OCI-LY7 (cell line): ENCODE measurements at regions of chr5 and their contacts with region 1.

Region 1: GRCh38 chr5:34915139-34915855 is at the starts of genes BRIX1 and RAD1:
- DNase-seq: peak; percentile 96
- H3K4me3 ChIP-seq: peak within 1 kb of the TSS; percentile 86
- H3K27ac ChIP-seq: peak within 1 kb of the TSS; percentile 79
- H3K4me1 ChIP-seq: peaks cover 27% of the 10 kb centered on the region
- CTCF ChIP-seq: no peak
- total RNA-seq, gene BRIX1: 59.7 and 75.6 TPM in 2 replicates
- total RNA-seq, gene RAD1: 58.4 and 82.1 TPM in 2 replicates

Region 2: GRCh38 chr5:33440482-33441240 is 1474.6 kb before region 1 on chr5 and contains the start of gene TARS1:
- CTCF ChIA-PET with region 1: no interaction called
- POLR2A ChIA-PET with region 1: no interaction called
- intact Hi-C with region 1: loop called (anchors 10 kb)
- DNase-seq: peak; percentile 96
- H3K4me3 ChIP-seq: peak within 1 kb of the TSS; percentile 84
- H3K27ac ChIP-seq: peak within 1 kb of the TSS; percentile 66
- H3K4me1 ChIP-seq: peaks cover 15% of the 10 kb centered on the region
- CTCF ChIP-seq: no peak
- total RNA-seq, gene TARS1: 101 and 118 TPM in 2 replicates

Region 3: DNA sequence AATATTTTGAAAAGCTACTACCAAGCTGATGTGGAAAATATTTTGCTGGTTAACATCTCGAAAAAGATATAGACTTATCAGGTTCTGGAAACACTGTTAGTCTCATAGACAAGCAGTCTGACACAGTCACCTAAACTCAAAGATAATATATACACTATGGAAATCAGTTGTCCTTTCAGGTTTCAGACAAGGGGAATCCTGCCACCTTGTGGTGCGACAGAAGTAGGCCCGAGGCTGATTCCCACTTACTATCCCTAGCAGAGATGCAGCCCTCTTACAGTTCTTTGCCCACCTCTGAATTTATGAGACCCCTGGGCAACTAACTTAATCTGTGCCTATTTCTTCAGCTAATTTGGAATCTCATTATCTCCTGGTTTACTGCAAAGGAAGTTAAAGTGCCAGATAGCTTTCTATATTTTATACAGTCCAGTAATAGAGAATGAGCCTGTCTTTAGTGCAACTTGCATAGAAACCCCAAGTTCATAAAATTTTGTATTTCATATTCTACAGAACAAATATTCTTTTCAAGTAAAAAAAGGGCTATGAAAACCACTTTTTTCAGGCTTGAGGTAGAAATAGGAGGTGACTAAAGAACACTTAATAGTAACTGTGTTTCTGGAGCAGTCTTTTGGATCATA is 16.9 kb before region 1 on chr5:
- CTCF ChIA-PET with region 1: no interaction called
- POLR2A ChIA-PET with region 1: interaction called, 11 read pairs
- intact Hi-C with region 1: no loop called
- DNase-seq: peak; percentile 64
- H3K4me3 ChIP-seq: no peak overlapping the region
- H3K27ac ChIP-seq: no peak overlapping the region
- H3K4me1 ChIP-seq: no peaks in the 10 kb centered on the region
- CTCF ChIP-seq: peak; percentile 95

Region 4: GRCh38 chr5:35902046-35902676 is 986.9 kb after region 1 on chr5:
- CTCF ChIA-PET with region 1: no interaction called
- POLR2A ChIA-PET with region 1: no interaction called
- intact Hi-C with region 1: loop called (anchors 5 kb)
- DNase-seq: no peak
- H3K4me3 ChIP-seq: no peak overlapping the region
- H3K27ac ChIP-seq: peak overlapping the region; percentile 54
- H3K4me1 ChIP-seq: peaks cover 87% of the 10 kb centered on the region
- CTCF ChIP-seq: no peak

Region 5: GRCh38 chr5:36875790-36876388 is 1960.6 kb after region 1 on chr5:
- CTCF ChIA-PET with region 1: no interaction called
- POLR2A ChIA-PET with region 1: no interaction called
- intact Hi-C with region 1: loop called (anchors 10 kb)
- DNase-seq: peak; percentile 87
- H3K4me3 ChIP-seq: peak overlapping the region; percentile 82
- H3K27ac ChIP-seq: peak overlapping the region; percentile 91
- H3K4me1 ChIP-seq: peaks cover 49% of the 10 kb centered on the region
- CTCF ChIP-seq: peak; percentile 74